Cardiac septum (tissue), 1 donor: ENCODE measurements at regions of chr5 and their contacts with region 1.

Region 1: GRCh38 chr5:167939686-167940085 is 351.8 kb upstream of the WWC1 start:
- DNase-seq: no peak

Region 2: GRCh38 chr5:168006456-168007130 is 66.9 kb after region 1 on chr5:
- intact Hi-C with region 1: loop called (anchors 5 kb)
- DNase-seq: no peak

Region 3: GRCh38 chr5:168020542-168021294 is 81.0 kb after region 1 on chr5:
- intact Hi-C with region 1: loop called (anchors 5 kb)
- DNase-seq: no peak